PC-9 (cell line): ENCODE measurements at regions of chr10 and their contacts with region 1.

Region 1: GRCh38 chr10:110959379-110960332 is 40.3 kb downstream of the SHOC2 start:
- DNase-seq: no peak
- H3K4me3 ChIP-seq: no peak overlapping the region
- H3K27ac ChIP-seq: no peak overlapping the region
- H3K4me1 ChIP-seq: no peaks in the 10 kb centered on the region
- H3K27me3 ChIP-seq: no peaks in the 10 kb centered on the region
- CTCF ChIP-seq: no peak

Region 2: GRCh38 chr10:111004016-111004415 is 44.4 kb after region 1 on chr10:
- CTCF ChIA-PET with region 1: no interaction called
- POLR2A ChIA-PET with region 1: no interaction called
- intact Hi-C with region 1: loop called (anchors 10 kb)
- DNase-seq: no peak
- H3K4me3 ChIP-seq: no peak overlapping the region
- H3K27ac ChIP-seq: no peak overlapping the region
- H3K4me1 ChIP-seq: no peaks in the 10 kb centered on the region
- H3K27me3 ChIP-seq: no peaks in the 10 kb centered on the region
- CTCF ChIP-seq: no peak

Region 3: GRCh38 chr10:111057006-111057405 is 97.3 kb after region 1 on chr10:
- CTCF ChIA-PET with region 1: no interaction called
- POLR2A ChIA-PET with region 1: interaction called, 10 read pairs
- intact Hi-C with region 1: no loop called
- DNase-seq: no peak
- H3K4me3 ChIP-seq: no peak overlapping the region
- H3K27ac ChIP-seq: no peak overlapping the region
- H3K4me1 ChIP-seq: no peaks in the 10 kb centered on the region
- H3K27me3 ChIP-seq: no peaks in the 10 kb centered on the region
- CTCF ChIP-seq: no peak